HEK293 (cell line): ENCODE measurements at regions of chr17 and their contacts with region 1.

Region 1: GRCh38 chr17:64648234-64648633 is 13.9 kb downstream of the SMURF2 start:
- H3K4me3 ChIP-seq: no peak overlapping the region
- H3K27ac ChIP-seq: no peak overlapping the region
- H3K4me1 ChIP-seq: no peaks in the 10 kb centered on the region
- CTCF ChIP-seq: no peak

Region 2: DNA sequence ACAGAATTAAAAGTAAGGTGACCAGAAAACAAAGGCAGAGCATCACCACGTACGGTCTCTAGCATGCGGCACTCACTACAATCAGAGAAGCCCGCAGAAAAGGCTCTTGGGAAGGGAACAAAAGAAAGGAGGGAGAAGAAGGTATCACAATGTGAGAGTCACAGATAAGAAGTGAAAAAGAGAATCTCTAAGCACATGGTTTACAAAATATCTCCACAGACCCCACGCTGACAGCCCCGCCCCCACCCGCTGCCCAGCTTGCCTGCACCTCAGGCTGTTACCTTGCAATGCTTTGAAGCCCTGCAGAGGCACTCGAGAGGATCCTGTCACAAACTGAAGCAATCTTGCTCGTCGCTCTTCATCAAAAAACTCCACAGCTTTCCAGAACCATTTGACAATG is 100.9 kb before region 1 on chr17:
- CTCF ChIA-PET with region 1: interaction called, 10 read pairs
- POLR2A ChIA-PET with region 1: no interaction called
- H3K4me3 ChIP-seq: no peak overlapping the region
- H3K27ac ChIP-seq: no peak overlapping the region
- H3K4me1 ChIP-seq: no peaks in the 10 kb centered on the region
- CTCF ChIP-seq: no peak

Region 3: DNA sequence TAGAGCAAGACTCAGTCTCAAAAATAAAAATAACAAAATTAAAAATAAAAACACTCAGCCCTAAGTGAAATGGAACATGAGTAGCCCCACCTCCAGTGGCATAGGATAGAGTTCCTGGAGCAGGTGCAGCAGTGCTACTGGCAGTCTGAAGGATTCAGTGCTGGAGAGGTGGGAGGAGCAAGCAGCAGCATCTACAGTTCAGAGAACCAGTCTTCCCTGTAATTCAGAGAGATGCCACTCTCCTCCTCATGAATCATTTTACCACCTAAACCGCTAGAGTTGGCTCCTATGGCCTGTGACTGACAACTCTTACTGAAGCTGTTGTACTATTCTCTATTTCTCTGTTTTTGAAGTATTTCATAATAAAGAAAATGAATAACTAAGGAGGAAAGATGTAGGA is 69.8 kb after region 1 on chr17:
- CTCF ChIA-PET with region 1: no interaction called
- POLR2A ChIA-PET with region 1: no interaction called
- H3K4me3 ChIP-seq: no peak overlapping the region
- H3K27ac ChIP-seq: no peak overlapping the region
- H3K4me1 ChIP-seq: no peaks in the 10 kb centered on the region
- CTCF ChIP-seq: no peak